Naive thymus-derived CD4-positive, alpha-beta T cell (primary cell): ENCODE measurements at regions of chr9 and their contacts with region 1.

Region 1: GRCh38 chr9:69672596-69673310 is 582 bp upstream of the APBA1 start:
- DNase-seq: peak; percentile 51 to 78 (median 70)
- ATAC-seq: peak; percentile 88
- H3K4me3 ChIP-seq: peak overlapping the region; percentile 84
- H3K4me3 Mint-ChIP-seq: peak overlapping the region; percentile 80 to 91 (median 86)
- H3K27ac ChIP-seq: no peak overlapping the region
- H3K27ac Mint-ChIP-seq: peak overlapping the region in 7 of 9 donors; percentile 17 to 62 (median 59)
- H3K4me1 ChIP-seq: peaks cover 5 to 6% of the 10 kb centered on the region in 2 donors
- H3K4me1 Mint-ChIP-seq: peaks cover 0 to 35% (median 28%) of the 10 kb centered on the region in 7 donors
- H3K27me3 ChIP-seq: no peaks in the 10 kb centered on the region
- H3K27me3 Mint-ChIP-seq: peaks cover 0 to 47% (median 9%) of the 10 kb centered on the region in 5 donors

Region 2: DNA sequence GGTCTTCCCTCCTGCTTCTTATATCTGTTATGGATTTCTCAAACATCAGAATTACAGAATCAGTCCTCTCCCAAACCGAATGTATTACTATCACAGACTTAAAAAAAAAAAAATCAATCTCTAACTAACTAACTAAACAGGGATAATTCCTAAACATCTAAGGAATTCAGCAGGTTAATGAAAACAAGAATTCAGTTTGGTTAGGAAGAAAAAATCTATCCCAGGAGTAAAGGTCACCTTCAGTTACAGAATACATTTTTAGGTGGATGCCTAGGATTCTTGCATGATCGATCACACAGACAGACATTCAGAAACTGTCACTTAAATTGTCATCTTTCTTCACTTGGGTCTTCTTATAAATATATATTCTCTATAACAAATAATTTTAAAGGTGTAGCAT is 75.6 kb after region 1 on chr9:
- CTCF ChIA-PET with region 1: no interaction called
- POLR2A ChIA-PET with region 1: no interaction called
- intact Hi-C with region 1: no loop called
- DNase-seq: no peak
- ATAC-seq: no peak
- H3K4me3 ChIP-seq: no peak overlapping the region
- H3K4me3 Mint-ChIP-seq: no peak overlapping the region
- H3K27ac ChIP-seq: no peak overlapping the region
- H3K27ac Mint-ChIP-seq: peak overlapping the region in 1 of 9 donors; percentile 5
- H3K4me1 ChIP-seq: peaks cover 0 to 3% of the 10 kb centered on the region in 2 donors
- H3K4me1 Mint-ChIP-seq: peaks cover 26 to 92% (median 76%) of the 10 kb centered on the region in 7 donors
- H3K27me3 ChIP-seq: no peaks in the 10 kb centered on the region
- H3K27me3 Mint-ChIP-seq: no peaks in the 10 kb centered on the region

Region 3: DNA sequence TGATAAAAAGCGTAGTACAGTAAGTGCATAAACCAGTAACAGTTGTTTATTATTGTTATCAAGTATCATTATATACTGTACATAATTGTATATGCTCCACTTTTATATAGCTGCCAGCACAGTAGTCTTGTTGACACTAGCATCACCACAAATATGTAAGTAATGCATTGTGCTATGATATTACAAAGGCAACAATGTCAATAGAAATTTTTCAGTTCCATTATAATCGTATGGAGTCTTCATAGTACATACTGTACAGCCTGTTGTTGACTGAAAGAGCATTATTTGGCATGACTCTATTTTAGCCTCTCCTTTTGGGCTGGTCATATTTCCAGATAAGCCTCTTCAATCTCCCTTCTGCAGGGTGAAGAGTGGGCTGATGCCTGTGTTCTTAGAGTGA is 188.3 kb after region 1 on chr9:
- CTCF ChIA-PET with region 1: no interaction called
- POLR2A ChIA-PET with region 1: no interaction called
- intact Hi-C with region 1: loop called in 1 of 2 experiments (anchors 5 kb)
- DNase-seq: no peak
- ATAC-seq: no peak
- H3K4me3 ChIP-seq: no peak overlapping the region
- H3K4me3 Mint-ChIP-seq: no peak overlapping the region
- H3K27ac ChIP-seq: no peak overlapping the region
- H3K27ac Mint-ChIP-seq: no peak overlapping the region
- H3K4me1 ChIP-seq: no peaks in the 10 kb centered on the region
- H3K4me1 Mint-ChIP-seq: peaks cover 0 to 8% (median 4%) of the 10 kb centered on the region in 7 donors
- H3K27me3 ChIP-seq: no peaks in the 10 kb centered on the region
- H3K27me3 Mint-ChIP-seq: peaks cover 0 to 12% (median 11%) of the 10 kb centered on the region in 5 donors

Region 4: GRCh38 chr9:69877854-69878514 is 205.2 kb after region 1 on chr9:
- CTCF ChIA-PET with region 1: interaction called, 5 read pairs
- POLR2A ChIA-PET with region 1: no interaction called
- intact Hi-C with region 1: loop called (anchors 1 kb)
- DNase-seq: peak in 5 of 9 donors; percentile 2 to 25 (median 6)
- ATAC-seq: no peak
- H3K4me3 ChIP-seq: no peak overlapping the region
- H3K4me3 Mint-ChIP-seq: no peak overlapping the region
- H3K27ac ChIP-seq: no peak overlapping the region
- H3K27ac Mint-ChIP-seq: no peak overlapping the region
- H3K4me1 ChIP-seq: no peaks in the 10 kb centered on the region
- H3K4me1 Mint-ChIP-seq: no peaks in the 10 kb centered on the region
- H3K27me3 ChIP-seq: no peaks in the 10 kb centered on the region
- H3K27me3 Mint-ChIP-seq: peaks cover 0 to 37% (median 2%) of the 10 kb centered on the region in 5 donors

Region 5: DNA sequence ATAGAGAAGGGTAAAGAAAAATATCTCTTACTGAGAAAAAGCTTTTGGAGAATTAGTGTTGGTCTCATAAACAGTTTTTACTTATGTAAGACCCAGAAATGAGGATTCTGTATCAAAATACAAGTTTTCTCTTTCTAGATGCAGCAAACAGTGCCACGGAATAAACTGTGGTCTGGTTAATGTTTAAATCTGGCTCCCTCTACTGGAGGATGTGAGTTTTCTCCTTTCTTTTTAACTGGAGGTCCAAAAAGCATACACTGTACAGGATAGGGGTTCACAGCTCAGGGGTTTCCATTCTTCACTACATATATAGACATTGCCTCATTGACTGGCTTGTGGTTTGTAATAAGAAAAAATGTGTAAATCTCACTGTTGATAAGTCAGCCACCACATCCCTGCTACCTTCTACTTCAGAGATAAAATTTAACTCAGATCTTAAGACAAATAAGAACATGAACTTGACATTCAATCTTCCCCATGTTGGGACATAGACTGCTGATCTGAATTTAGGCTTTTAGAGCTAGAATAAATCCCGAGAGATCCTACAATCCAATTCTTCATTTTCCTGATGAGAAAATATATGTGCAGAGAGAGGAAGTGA is 246.8 kb after region 1 on chr9:
- CTCF ChIA-PET with region 1: interaction called, 3 read pairs
- POLR2A ChIA-PET with region 1: no interaction called
- intact Hi-C with region 1: loop called (anchors 1 kb)
- DNase-seq: peak in 6 of 9 donors; percentile 14 to 52 (median 41)
- ATAC-seq: peak; percentile 85
- H3K4me3 ChIP-seq: no peak overlapping the region
- H3K4me3 Mint-ChIP-seq: no peak overlapping the region
- H3K27ac ChIP-seq: no peak overlapping the region
- H3K27ac Mint-ChIP-seq: no peak overlapping the region
- H3K4me1 ChIP-seq: no peaks in the 10 kb centered on the region
- H3K4me1 Mint-ChIP-seq: no peaks in the 10 kb centered on the region
- H3K27me3 ChIP-seq: no peaks in the 10 kb centered on the region
- H3K27me3 Mint-ChIP-seq: peaks cover 5 to 21% (median 17%) of the 10 kb centered on the region in 5 donors